ENCODE measurements at regions of chr9 and their contacts with region 1.

Region 1: GRCh38 chr9:90240541-90240940 is 402.1 kb downstream of the DIRAS2 start:
- DNase-seq: no peak
- H3K4me3 ChIP-seq: no peak overlapping the region
- H3K27ac ChIP-seq: no peak overlapping the region
- H3K4me1 ChIP-seq: no peaks in the 10 kb centered on the region
- H3K27me3 ChIP-seq: no peaks in the 10 kb centered on the region
- CTCF ChIP-seq: no peak
- EP300 ChIP-seq: no peak
- POLR2A ChIP-seq: no peak

Region 2: GRCh38 chr9:90086101-90086511 is 154.4 kb before region 1 on chr9:
- intact Hi-C with region 1: no loop called
- DNase-seq: no peak
- H3K4me3 ChIP-seq: no peak overlapping the region
- H3K27ac ChIP-seq: no peak overlapping the region
- H3K4me1 ChIP-seq: peaks cover 7% of the 10 kb centered on the region
- H3K27me3 ChIP-seq: no peaks in the 10 kb centered on the region
- CTCF ChIP-seq: no peak
- EP300 ChIP-seq: no peak
- POLR2A ChIP-seq: no peak

Region 3: GRCh38 chr9:90201766-90202165 is 38.8 kb before region 1 on chr9:
- intact Hi-C with region 1: loop called in 1 of 4 experiments (anchors 2 kb)
- DNase-seq: no peak
- H3K4me3 ChIP-seq: no peak overlapping the region
- H3K27ac ChIP-seq: no peak overlapping the region
- H3K4me1 ChIP-seq: no peaks in the 10 kb centered on the region
- H3K27me3 ChIP-seq: no peaks in the 10 kb centered on the region
- CTCF ChIP-seq: no peak
- EP300 ChIP-seq: no peak
- POLR2A ChIP-seq: no peak

Region 4: DNA sequence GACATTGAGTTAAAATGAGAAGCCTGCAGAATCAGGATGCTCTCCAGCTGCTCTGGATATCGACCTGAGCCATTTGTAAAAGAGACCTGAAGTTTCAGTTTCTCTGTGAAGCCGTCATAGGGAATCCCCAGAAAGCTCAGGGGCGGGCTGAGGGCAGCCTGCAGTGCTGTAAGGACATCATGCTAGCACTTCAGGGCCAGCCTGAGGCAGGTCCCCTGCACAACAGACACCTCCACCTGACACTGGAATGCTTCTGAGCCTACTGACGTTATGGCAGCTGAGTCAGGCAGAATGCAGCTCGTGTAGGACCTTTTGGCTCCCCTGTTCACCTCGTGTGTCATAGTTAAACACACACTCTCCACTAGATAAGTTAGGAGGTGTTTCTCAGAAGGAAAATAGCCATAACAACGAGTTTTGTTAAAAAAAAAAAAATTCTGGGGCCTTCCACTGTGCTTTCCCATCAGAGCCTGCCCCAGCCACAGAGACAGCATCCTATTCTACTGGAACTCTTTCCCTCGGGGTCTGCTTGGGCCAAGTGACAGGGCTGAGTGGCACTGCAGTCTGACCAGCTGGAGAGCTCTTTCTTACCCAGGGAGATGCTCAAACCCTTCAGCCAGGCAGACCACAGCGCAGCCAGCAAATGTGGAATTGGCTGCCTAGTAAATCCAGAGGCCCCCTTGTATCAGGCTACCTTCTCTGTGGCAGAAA is 47.2 kb after region 1 on chr9:
- intact Hi-C with region 1: no loop called
- DNase-seq: no peak
- H3K4me3 ChIP-seq: no peak overlapping the region
- H3K27ac ChIP-seq: no peak overlapping the region
- H3K4me1 ChIP-seq: no peaks in the 10 kb centered on the region
- H3K27me3 ChIP-seq: no peaks in the 10 kb centered on the region
- CTCF ChIP-seq: no peak
- EP300 ChIP-seq: no peak
- POLR2A ChIP-seq: no peak

Region 5: DNA sequence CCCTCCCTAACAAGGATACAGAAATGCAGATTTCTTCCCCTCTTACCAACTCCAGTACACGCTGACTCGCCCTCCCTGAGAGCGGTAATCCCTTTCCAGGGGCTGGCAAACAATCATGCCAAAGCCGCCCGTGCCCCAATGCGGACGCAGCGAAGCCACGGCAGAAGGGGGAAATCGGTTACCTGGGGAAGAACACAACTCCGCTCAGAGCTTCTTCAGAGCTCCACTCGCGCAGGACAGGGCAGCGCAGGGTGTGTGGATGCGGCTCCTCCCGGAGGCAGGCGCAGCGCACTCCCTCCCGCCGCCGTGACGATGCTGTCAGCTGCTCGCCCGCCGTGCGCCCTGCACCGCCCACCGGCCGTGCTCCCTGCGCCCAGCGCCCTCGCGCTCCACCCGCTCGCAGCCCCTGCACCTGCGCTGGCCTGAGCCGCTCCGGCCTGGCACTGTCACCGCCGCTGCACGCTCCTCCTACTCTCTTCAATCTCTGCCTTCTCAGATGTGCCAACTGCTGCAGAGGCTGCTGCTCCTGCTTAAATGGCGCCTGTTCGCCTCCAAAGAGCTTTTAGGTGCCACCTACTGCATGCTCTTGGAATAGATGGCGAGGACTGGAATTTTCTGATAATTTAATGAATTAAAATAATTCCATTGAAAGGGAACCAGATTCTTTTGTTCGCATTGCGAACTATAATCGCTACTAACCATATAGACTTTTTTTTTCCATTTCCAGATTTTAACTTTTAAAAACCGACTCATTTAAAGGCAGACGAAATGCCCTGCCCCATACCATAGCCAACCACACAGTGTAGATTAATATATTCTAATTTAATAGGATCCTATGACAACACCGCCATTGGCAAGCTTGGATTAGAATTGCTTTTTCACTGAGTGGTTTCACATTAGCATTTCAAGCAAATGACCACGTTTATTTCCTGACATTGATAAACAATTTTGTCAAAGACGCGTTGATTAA is 402.3 kb after region 1 on chr9 and contains the start of gene DIRAS2:
- intact Hi-C with region 1: no loop called
- DNase-seq: peak in 1 of 5 donors; percentile 37
- H3K4me3 ChIP-seq: no peak within 1 kb of the TSS
- H3K27ac ChIP-seq: no peak within 1 kb of the TSS
- H3K4me1 ChIP-seq: no peaks in the 10 kb centered on the region
- H3K27me3 ChIP-seq: no peaks in the 10 kb centered on the region
- CTCF ChIP-seq: no peak
- EP300 ChIP-seq: no peak
- POLR2A ChIP-seq: no peak
- total RNA-seq, gene DIRAS2: 0.07 to 0.25 (median 0.18) TPM in 5 of 7 donors, not detected in the others

Measured in ovary (tissue), 10 donors.